Esophagus muscularis mucosa (tissue), 4 donors: ENCODE measurements at regions of chr16 and their contacts with region 1.

Region 1: DNA sequence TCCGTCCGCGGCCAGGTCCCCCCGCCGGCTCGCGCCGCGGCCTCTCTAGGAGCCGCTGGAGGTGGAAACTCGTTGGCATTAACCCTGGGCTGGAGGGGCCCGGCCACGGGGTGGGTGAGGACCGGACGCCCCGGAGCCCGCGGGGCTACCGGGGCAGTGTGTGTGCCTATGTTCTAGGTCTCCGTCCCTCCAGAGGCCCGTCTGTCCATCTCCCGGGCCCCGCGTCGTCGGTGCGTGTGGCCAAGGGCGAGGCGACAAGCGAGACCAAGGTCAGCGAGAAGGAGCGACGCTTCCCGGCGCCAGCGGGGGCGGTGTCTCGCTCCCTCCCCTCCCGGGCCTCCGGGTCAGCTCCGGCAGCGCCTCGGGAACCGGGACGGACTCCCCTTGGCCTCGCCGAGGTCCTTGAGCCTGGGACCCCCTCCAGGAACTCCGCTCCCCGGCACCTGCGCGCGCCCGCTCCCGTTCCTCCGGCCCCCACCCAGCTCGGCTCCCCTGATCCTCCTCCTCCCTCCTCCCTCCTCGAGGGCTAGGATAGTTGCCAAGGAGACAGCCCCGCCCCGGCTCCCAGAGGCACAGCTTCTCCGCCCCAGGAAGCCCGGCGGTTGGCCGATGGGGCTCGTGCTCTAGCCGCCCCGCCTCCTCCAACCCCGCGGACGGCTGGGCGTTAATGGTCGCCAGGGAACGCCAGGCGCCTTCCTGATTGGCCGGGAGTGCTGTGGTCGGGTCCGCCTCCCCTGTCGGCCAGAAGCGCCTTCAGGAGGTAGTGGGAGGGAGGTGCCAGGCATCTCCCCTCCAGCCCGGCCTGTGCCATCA is 663 bp upstream of the ZNF768 start:
- DNase-seq: peak; percentile 98
- H3K4me3 ChIP-seq: peak overlapping the region; percentile 70 to 83 (median 82)
- H3K27ac ChIP-seq: peak overlapping the region; percentile 97 to 98 (median 98)
- H3K4me1 ChIP-seq: peaks cover 18 to 45% (median 34%) of the 10 kb centered on the region in 4 donors
- H3K27me3 ChIP-seq: no peaks in the 10 kb centered on the region
- CTCF ChIP-seq: peak in 2 of 3 experiments; percentile 20 to 44
- EP300 ChIP-seq: no peak
- POLR2A ChIP-seq: peak; percentile 71

Region 2: DNA sequence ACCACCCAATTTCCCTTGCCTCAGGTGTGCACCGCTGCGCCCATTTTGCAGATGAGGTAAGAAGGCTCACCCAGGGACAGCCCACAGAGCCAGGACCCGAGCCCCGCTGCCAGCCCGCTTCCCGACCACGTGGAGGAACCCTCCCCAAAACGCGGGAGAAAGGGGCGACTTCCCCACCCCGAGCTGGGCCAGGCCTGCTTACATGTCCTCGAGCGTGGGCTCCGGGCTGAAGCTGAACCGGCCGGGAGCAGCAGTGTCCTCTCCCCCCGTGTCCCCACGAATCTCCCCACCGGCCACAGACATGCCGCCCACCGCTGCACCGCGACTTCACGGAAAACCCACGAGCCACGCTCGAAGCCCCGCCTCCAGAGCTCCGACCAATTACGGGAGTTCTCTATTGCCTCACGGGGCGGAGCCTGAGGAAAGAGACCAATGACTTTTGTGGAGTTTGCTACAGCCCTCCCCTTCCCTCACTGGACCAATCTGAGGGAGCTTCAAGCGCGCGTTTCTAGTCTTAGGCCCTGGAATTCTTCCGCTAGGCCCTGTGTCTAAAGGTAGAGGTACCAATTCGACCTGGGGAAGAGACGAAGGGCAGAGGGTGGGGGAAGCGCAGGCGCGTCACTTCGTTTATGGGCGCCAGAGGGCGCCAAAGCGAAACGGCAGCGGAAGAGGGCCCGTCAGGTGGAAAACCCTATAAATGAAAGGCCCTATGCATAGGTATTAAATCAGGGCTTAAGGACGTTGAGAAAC is 97.2 kb before region 1 on chr16 and contains the start of gene DCTPP1:
- intact Hi-C with region 1: loop called (anchors 5 kb)
- DNase-seq: peak; percentile 98
- H3K4me3 ChIP-seq: peak within 1 kb of the TSS; percentile 67 to 70 (median 68)
- H3K27ac ChIP-seq: peak within 1 kb of the TSS; percentile 75 to 88 (median 80)
- H3K4me1 ChIP-seq: peaks cover 16 to 23% (median 19%) of the 10 kb centered on the region in 4 donors
- H3K27me3 ChIP-seq: no peaks in the 10 kb centered on the region
- CTCF ChIP-seq: peak; percentile 68 to 90 (median 77)
- EP300 ChIP-seq: no peak
- POLR2A ChIP-seq: no peak
- total RNA-seq, gene DCTPP1: 11.1 to 21.7 (median 14.1) TPM

Region 3: GRCh38 chr16:30445408-30446202 is 81.4 kb before region 1 on chr16 and contains the start of gene SEPHS2:
- intact Hi-C with region 1: loop called (anchors 2 kb)
- DNase-seq: peak; percentile 99
- H3K4me3 ChIP-seq: peak within 1 kb of the TSS; percentile 77 to 95 (median 82)
- H3K27ac ChIP-seq: peak within 1 kb of the TSS; percentile 93 to 99 (median 98)
- H3K4me1 ChIP-seq: peaks cover 17 to 27% (median 24%) of the 10 kb centered on the region in 4 donors
- H3K27me3 ChIP-seq: no peaks in the 10 kb centered on the region
- CTCF ChIP-seq: peak; percentile 49 to 58 (median 50)
- EP300 ChIP-seq: no peak
- POLR2A ChIP-seq: peak; percentile 76
- total RNA-seq, gene SEPHS2: 26.5 to 37.6 (median 33.8) TPM

Region 4: DNA sequence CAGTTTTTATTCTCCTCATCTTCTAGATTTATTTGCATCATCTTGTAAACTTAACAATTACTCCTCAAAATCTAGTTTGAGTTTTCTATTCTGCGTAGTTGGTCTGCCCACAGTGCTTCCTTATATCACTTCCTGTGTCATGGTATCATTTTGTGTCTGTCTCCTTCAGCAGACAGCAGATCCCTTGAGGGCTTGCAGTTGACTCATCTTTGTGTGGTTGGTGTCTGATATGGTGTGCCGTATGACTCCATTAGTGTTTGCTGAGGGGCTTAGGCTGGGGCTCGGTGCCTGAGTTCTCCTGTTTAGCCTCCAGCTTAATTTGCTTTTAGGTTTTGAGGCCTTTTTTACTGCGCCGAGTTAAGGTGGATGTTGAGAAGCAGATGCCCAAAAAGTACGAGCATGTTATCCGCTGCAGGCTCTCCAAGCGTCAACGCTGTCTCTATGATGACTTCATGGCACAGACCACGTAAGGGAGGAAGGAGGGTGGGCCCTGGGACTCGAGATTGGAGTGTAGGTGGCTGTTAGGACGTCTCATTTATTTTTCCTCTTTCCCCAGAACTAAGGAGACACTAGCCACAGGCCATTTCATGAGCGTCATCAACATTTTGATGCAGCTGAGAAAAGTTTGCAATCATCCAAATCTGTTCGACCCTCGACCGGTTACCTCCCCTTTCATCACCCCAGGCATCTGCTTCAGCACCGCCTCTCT is 188.9 kb after region 1 on chr16:
- intact Hi-C with region 1: no loop called
- DNase-seq: no peak
- H3K4me3 ChIP-seq: no peak overlapping the region
- H3K27ac ChIP-seq: peak overlapping the region in 1 of 4 donors; percentile 13
- H3K4me1 ChIP-seq: peaks cover 0 to 3% (median 0%) of the 10 kb centered on the region in 4 donors
- H3K27me3 ChIP-seq: no peaks in the 10 kb centered on the region
- CTCF ChIP-seq: no peak
- EP300 ChIP-seq: no peak
- POLR2A ChIP-seq: no peak